ENCODE measurements at regions of chr10 and their contacts with region 1.

Region 1: DNA sequence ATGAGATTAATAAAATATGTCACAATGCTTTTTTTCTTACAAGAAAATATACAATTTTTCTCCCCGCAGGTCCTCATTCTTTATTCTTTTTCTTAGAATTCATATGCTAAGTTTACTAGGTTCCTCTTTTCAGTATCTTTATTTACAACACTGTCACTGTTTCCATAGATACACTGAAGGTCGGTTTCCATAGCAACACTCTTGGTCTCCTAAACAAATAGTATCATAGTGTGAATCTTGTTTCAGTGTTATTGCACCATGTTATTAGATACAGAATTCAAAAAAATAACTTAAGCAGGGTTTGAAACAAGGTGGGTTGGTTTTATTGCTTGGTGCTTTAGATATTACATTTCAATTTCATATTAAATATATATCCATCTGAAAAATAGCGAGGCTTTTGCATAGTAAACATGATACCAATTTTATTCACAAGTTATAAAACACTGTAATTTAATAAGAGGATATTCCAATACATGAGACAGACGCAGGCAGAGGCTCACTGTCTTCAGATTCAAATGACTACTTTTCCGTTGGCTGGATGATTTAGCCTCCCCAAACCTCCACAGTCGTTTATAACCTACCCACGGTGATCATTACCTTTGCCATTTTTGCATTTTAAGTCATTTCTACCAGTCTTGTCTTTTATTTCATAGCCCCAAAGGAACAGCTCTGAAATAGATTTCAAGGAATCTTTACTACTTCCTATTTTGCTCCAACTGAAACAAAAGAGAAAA is 88.9 kb upstream of the KLF6 start:
- DNase-seq: peak in 8 of 9 donors; percentile 8 to 85 (median 74)
- ATAC-seq: peak; percentile 77
- H3K4me3 ChIP-seq: no peak overlapping the region
- H3K4me3 Mint-ChIP-seq: peak overlapping the region in 7 of 10 donors; percentile 14 to 73 (median 46)
- H3K27ac ChIP-seq: peak overlapping the region; percentile 65
- H3K27ac Mint-ChIP-seq: peak overlapping the region; percentile 87 to 95 (median 91)
- H3K4me1 ChIP-seq: peaks cover 41 to 51% of the 10 kb centered on the region in 2 donors
- H3K4me1 Mint-ChIP-seq: peaks cover 30 to 59% (median 57%) of the 10 kb centered on the region in 7 donors
- H3K27me3 ChIP-seq: no peaks in the 10 kb centered on the region
- H3K27me3 Mint-ChIP-seq: no peaks in the 10 kb centered on the region

Region 2: DNA sequence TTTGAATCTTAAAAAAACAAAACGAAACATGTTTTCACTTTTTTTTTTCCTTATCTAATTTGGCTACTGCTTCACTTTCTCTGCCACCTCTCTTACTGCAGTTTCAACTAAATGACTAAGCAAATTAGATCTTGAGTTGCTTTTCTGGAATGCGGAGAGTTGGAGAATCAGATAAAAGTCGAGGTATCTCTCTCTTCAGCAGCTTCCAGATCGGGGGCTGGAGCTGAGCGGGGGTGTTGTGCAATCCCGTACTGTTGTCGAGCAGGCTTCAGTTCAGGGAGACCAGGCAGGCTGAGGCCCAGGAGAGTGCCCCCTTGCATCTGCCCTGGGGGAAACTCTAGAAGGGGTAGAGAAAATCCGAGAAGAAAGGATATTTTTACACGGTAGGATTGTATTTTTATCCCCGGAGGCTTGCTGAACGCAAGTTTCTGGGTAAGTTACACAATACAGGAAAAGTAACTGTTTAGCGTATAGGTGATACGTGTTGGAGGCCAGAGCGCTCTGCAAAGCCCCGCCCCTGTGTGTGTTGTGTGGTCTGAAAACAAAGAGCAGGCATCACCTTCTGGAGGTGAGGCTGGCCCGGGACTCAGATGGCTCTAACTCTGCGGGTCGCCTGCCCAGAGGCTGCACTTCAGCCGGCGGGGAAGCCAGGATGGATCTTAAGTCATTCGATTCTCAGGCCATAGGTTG is 205.5 kb before region 1 on chr10:
- CTCF ChIA-PET with region 1: no interaction called
- POLR2A ChIA-PET with region 1: no interaction called
- intact Hi-C with region 1: loop called in 1 of 2 experiments (anchors 5 kb)
- DNase-seq: peak; percentile 34 to 85 (median 77)
- ATAC-seq: peak; percentile 91
- H3K4me3 ChIP-seq: peak overlapping the region; percentile 63
- H3K4me3 Mint-ChIP-seq: peak overlapping the region; percentile 82 to 98 (median 88)
- H3K27ac ChIP-seq: peak overlapping the region; percentile 65
- H3K27ac Mint-ChIP-seq: peak overlapping the region; percentile 36 to 96 (median 93)
- H3K4me1 ChIP-seq: peaks cover 33% of the 10 kb centered on the region in 2 donors
- H3K4me1 Mint-ChIP-seq: peaks cover 27 to 51% (median 40%) of the 10 kb centered on the region in 7 donors
- H3K27me3 ChIP-seq: no peaks in the 10 kb centered on the region
- H3K27me3 Mint-ChIP-seq: no peaks in the 10 kb centered on the region

Region 3: DNA sequence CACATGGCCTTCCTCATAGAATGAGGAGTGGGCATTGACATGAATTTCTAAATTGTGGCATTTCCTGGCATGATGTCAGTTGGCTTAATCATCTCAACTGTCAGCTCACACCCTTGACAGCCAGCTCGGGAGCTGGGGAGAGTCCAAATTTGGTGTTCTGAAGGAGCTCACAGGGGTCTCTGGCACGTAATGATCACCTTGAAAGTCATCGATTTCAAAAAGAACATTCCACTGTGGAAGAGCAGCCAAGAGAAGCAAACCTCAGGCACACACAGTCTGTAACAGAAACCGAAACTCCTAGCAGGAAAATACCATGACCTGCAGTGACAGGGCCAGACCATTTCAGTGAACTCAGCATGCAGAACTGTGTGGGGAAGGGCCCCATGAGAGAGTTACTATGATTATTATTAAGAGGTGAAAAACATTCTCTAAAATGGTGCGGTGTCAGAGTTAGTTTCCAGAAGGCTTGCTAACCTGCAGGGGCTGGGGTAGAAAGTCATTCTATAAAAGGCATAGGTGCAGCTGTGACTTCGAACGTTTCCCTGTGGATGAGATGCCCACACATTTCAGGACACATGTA is 62.5 kb before region 1 on chr10:
- CTCF ChIA-PET with region 1: no interaction called
- POLR2A ChIA-PET with region 1: no interaction called
- intact Hi-C with region 1: loop called in 1 of 2 experiments (anchors 1 kb)
- DNase-seq: peak in 6 of 9 donors; percentile 22 to 54 (median 32)
- ATAC-seq: peak; percentile 62
- H3K4me3 ChIP-seq: peak overlapping the region; percentile 33
- H3K4me3 Mint-ChIP-seq: peak overlapping the region; percentile 10 to 85 (median 70)
- H3K27ac ChIP-seq: peak overlapping the region; percentile 71
- H3K27ac Mint-ChIP-seq: peak overlapping the region in 6 of 9 donors; percentile 67 to 91 (median 88)
- H3K4me1 ChIP-seq: peaks cover 52 to 65% of the 10 kb centered on the region in 2 donors
- H3K4me1 Mint-ChIP-seq: peaks cover 41 to 80% (median 63%) of the 10 kb centered on the region in 7 donors
- H3K27me3 ChIP-seq: no peaks in the 10 kb centered on the region
- H3K27me3 Mint-ChIP-seq: no peaks in the 10 kb centered on the region

Region 4: GRCh38 chr10:3852147-3852904 is 21.6 kb before region 1 on chr10:
- CTCF ChIA-PET with region 1: no interaction called
- POLR2A ChIA-PET with region 1: no interaction called
- intact Hi-C with region 1: loop called in 1 of 2 experiments (anchors 1 kb)
- DNase-seq: peak in 2 of 9 donors; percentile 28 to 55
- ATAC-seq: peak; percentile 87
- H3K4me3 ChIP-seq: no peak overlapping the region
- H3K4me3 Mint-ChIP-seq: peak overlapping the region in 1 of 10 donors; percentile 55
- H3K27ac ChIP-seq: no peak overlapping the region
- H3K27ac Mint-ChIP-seq: peak overlapping the region in 3 of 9 donors; percentile 70 to 92 (median 80)
- H3K4me1 ChIP-seq: peaks cover 5 to 12% of the 10 kb centered on the region in 2 donors
- H3K4me1 Mint-ChIP-seq: peaks cover 0 to 35% (median 8%) of the 10 kb centered on the region in 7 donors
- H3K27me3 ChIP-seq: no peaks in the 10 kb centered on the region
- H3K27me3 Mint-ChIP-seq: no peaks in the 10 kb centered on the region

Region 5: DNA sequence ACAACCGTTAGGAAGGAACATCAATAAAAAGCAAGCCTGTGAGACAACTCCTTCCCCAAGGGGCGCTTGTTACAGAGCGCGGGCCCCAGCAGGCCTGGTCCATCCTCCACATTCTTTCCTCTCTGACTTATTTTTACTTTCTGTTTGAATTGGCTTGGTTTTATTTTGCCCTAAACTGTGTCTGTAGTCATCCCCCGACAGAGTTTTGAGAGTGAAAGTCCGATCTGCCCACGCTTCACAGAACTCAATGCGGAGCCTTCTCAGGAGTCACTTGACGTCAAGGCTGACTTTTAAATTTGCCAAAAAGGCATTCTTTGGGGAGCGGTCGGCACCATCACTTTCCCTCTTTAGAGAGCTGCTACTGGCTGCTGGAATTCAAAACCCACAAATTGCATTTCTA is 61.2 kb after region 1 on chr10:
- CTCF ChIA-PET with region 1: no interaction called
- POLR2A ChIA-PET with region 1: interaction called, 3 read pairs
- intact Hi-C with region 1: loop called in 1 of 2 experiments (anchors 2 kb)
- DNase-seq: peak in 6 of 9 donors; percentile 4 to 73 (median 22)
- ATAC-seq: peak; percentile 84
- H3K4me3 ChIP-seq: peak overlapping the region; percentile 32
- H3K4me3 Mint-ChIP-seq: peak overlapping the region; percentile 43 to 83 (median 78)
- H3K27ac ChIP-seq: peak overlapping the region; percentile 43
- H3K27ac Mint-ChIP-seq: peak overlapping the region; percentile 67 to 95 (median 86)
- H3K4me1 ChIP-seq: peaks cover 0 to 5% of the 10 kb centered on the region in 2 donors
- H3K4me1 Mint-ChIP-seq: peaks cover 11 to 61% (median 17%) of the 10 kb centered on the region in 7 donors
- H3K27me3 ChIP-seq: no peaks in the 10 kb centered on the region
- H3K27me3 Mint-ChIP-seq: no peaks in the 10 kb centered on the region

Region 6: DNA sequence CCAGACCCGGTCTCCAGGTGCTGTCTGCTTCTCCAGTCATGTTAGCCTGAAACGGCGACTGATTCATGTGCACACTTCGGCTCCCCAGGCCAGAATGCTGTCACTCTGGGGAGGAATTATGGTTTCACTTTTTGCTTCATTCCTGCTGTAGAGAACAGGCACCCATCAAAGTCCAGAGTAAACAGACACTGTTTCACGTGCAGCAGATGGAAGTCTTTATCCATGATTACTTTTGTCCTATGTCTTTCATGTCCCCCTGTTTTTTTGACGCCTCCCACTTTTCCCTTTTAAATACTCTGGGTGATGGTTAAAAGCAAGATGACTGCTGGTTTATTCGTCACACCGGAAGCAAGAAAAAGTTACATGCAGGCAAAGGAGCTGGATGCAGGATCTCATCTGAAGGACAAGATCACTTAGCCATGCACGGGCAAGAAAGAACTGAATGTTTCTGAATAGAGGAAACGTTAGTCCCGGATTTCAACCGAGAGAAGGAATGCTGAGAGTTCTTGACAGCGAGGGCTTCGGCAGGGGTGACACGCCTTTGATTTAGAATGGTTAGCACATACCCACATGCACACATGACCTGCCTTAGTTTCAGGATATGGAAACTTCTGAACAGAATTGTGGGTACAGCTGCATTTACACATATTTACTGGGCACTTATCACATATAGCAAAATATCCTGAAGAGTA is 161.2 kb after region 1 on chr10:
- CTCF ChIA-PET with region 1: no interaction called
- POLR2A ChIA-PET with region 1: no interaction called
- intact Hi-C with region 1: loop called in 1 of 2 experiments (anchors 5 kb)
- DNase-seq: peak in 7 of 9 donors; percentile 6 to 41 (median 30)
- ATAC-seq: peak; percentile 78
- H3K4me3 ChIP-seq: peak overlapping the region; percentile 44
- H3K4me3 Mint-ChIP-seq: peak overlapping the region; percentile 73 to 91 (median 82)
- H3K27ac ChIP-seq: peak overlapping the region; percentile 22
- H3K27ac Mint-ChIP-seq: peak overlapping the region; percentile 67 to 91 (median 82)
- H3K4me1 ChIP-seq: peaks cover 4 to 11% of the 10 kb centered on the region in 2 donors
- H3K4me1 Mint-ChIP-seq: peaks cover 8 to 37% (median 17%) of the 10 kb centered on the region in 7 donors
- H3K27me3 ChIP-seq: no peaks in the 10 kb centered on the region
- H3K27me3 Mint-ChIP-seq: no peaks in the 10 kb centered on the region

Measured in naive thymus-derived CD4-positive, alpha-beta T cell (primary cell).